ENCODE measurements at regions of chr3 and their contacts with region 1.

Region 1: GRCh38 chr3:62284442-62284841 is 88.9 kb downstream of the FEZF2 start:
- DNase-seq: no peak
- ATAC-seq: no peak

Region 2: GRCh38 chr3:62261121-62261520 is 23.3 kb before region 1 on chr3:
- intact Hi-C with region 1: no loop called
- DNase-seq: no peak
- ATAC-seq: no peak

Region 3: GRCh38 chr3:63497641-63498040 is 1213.2 kb after region 1 on chr3:
- intact Hi-C with region 1: no loop called
- DNase-seq: no peak
- ATAC-seq: no peak

Region 4: DNA sequence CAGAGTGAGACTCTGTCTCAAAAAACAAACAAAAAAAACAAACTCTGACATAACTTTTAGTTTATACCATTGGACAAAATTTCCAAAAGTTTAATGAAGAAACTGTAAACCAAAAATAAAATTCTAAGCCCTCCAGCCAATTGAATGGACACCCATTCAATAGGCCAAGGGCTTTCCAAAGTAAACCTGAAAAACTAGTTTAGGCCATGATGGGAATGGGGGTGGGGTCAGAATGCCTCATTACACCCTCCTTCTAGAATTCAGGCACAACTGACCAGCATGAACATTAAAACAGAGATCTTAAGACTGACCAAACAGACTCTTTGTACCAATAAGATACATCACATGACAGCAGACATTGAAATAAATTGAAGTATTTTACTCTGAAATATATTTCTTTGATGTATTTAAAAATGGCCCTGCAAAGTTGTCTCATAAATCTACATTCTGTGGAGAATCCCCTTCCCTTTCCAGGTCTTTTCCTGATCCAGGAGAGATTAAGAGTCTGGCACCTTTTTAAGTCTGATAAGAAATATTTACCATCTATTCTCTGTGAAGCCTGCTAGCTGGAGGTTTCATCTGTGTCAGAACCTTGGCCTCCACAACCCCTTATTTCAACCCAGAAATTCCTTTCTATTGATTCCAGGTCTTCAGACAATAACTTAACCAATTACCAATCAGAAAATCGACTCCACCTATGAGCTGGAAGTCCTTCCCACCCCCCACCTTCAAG is 1563.4 kb after region 1 on chr3:
- intact Hi-C with region 1: loop called (anchors 5 kb)
- DNase-seq: no peak
- ATAC-seq: no peak